CD4-positive, alpha-beta T cell (primary cell): ENCODE measurements at regions of chr2 and their contacts with region 1.

Region 1: GRCh38 chr2:232550354-232551249 is at the starts of genes EIF4E2 and TIGD1:
- DNase-seq: peak; percentile 85 to 95 (median 90)
- ATAC-seq: peak; percentile 83
- H3K4me3 ChIP-seq: peak within 1 kb of the TSS; percentile 99
- H3K4me3 Mint-ChIP-seq: peak within 1 kb of the TSS; percentile 98
- H3K27ac ChIP-seq: peak within 1 kb of the TSS; percentile 91 to 95
- H3K27ac Mint-ChIP-seq: peak within 1 kb of the TSS; percentile 97
- H3K4me1 ChIP-seq: peaks cover 59% of the 10 kb centered on the region
- H3K4me1 Mint-ChIP-seq: peaks cover 85% of the 10 kb centered on the region
- H3K27me3 ChIP-seq: no peaks in the 10 kb centered on the region
- H3K27me3 Mint-ChIP-seq: no peaks in the 10 kb centered on the region
- CTCF ChIP-seq: peak; percentile 62
- total RNA-seq, gene EIF4E2: 45.9 to 46.0 TPM
- total RNA-seq, gene TIGD1: 22.1 to 22.2 TPM

Region 2: GRCh38 chr2:231786177-231786916 is 764.3 kb before region 1 on chr2 and contains the start of gene COPS7B:
- CTCF ChIA-PET with region 1: no interaction called
- POLR2A ChIA-PET with region 1: interaction called, 7 read pairs
- intact Hi-C with region 1: loop called in 1 of 2 experiments (anchors 2 kb)
- DNase-seq: peak; percentile 65 to 90 (median 74)
- ATAC-seq: peak; percentile 63
- H3K4me3 ChIP-seq: peak within 1 kb of the TSS; percentile 73
- H3K4me3 Mint-ChIP-seq: peak within 1 kb of the TSS; percentile 90
- H3K27ac ChIP-seq: peak within 1 kb of the TSS; percentile 52 to 55
- H3K27ac Mint-ChIP-seq: peak within 1 kb of the TSS; percentile 82
- H3K4me1 ChIP-seq: peaks cover 40% of the 10 kb centered on the region
- H3K4me1 Mint-ChIP-seq: peaks cover 73% of the 10 kb centered on the region
- H3K27me3 ChIP-seq: no peaks in the 10 kb centered on the region
- H3K27me3 Mint-ChIP-seq: no peaks in the 10 kb centered on the region
- CTCF ChIP-seq: peak; percentile 38
- total RNA-seq, gene COPS7B: 27.6 to 29.9 TPM

Region 3: GRCh38 chr2:231961349-231962166 is 589.0 kb before region 1 on chr2 and contains the start of gene DIS3L2:
- CTCF ChIA-PET with region 1: no interaction called
- POLR2A ChIA-PET with region 1: interaction called, 4 read pairs
- intact Hi-C with region 1: loop called in 1 of 2 experiments (anchors 5 kb)
- DNase-seq: peak; percentile 66 to 90 (median 74)
- ATAC-seq: peak; percentile 93
- H3K4me3 ChIP-seq: peak within 1 kb of the TSS; percentile 96
- H3K4me3 Mint-ChIP-seq: peak within 1 kb of the TSS; percentile 97
- H3K27ac ChIP-seq: peak within 1 kb of the TSS; percentile 45 to 69
- H3K27ac Mint-ChIP-seq: peak within 1 kb of the TSS; percentile 87
- H3K4me1 ChIP-seq: peaks cover 28% of the 10 kb centered on the region
- H3K4me1 Mint-ChIP-seq: peaks cover 47% of the 10 kb centered on the region
- H3K27me3 ChIP-seq: no peaks in the 10 kb centered on the region
- H3K27me3 Mint-ChIP-seq: no peaks in the 10 kb centered on the region
- CTCF ChIP-seq: no peak
- total RNA-seq, gene DIS3L2: 59.8 to 62.9 TPM

Region 4: GRCh38 chr2:232604535-232604934 is 53.9 kb after region 1 on chr2:
- CTCF ChIA-PET with region 1: no interaction called
- POLR2A ChIA-PET with region 1: interaction called, 4 read pairs
- intact Hi-C with region 1: loop called in 1 of 2 experiments (anchors 2 kb)
- DNase-seq: no peak
- ATAC-seq: no peak
- H3K4me3 ChIP-seq: no peak overlapping the region
- H3K4me3 Mint-ChIP-seq: no peak overlapping the region
- H3K27ac ChIP-seq: no peak overlapping the region
- H3K27ac Mint-ChIP-seq: no peak overlapping the region
- H3K4me1 ChIP-seq: peaks cover 9% of the 10 kb centered on the region
- H3K4me1 Mint-ChIP-seq: peaks cover 9% of the 10 kb centered on the region
- H3K27me3 ChIP-seq: no peaks in the 10 kb centered on the region
- H3K27me3 Mint-ChIP-seq: no peaks in the 10 kb centered on the region
- CTCF ChIP-seq: no peak